Heart left ventricle (tissue), 16 donors: ENCODE measurements at regions of chr10 and their contacts with region 1.

Region 1: GRCh38 chr10:5293691-5294550 is 70.8 kb upstream of the UCN3 start:
- DNase-seq: peak; percentile 34 to 84 (median 42)
- ATAC-seq: peak in 3 of 4 donors; percentile 3 to 47 (median 14)
- H3K4me3 ChIP-seq: peak overlapping the region in 1 of 12 donors; percentile 19
- H3K27ac ChIP-seq: peak overlapping the region in 10 of 12 donors; percentile 18 to 85 (median 58)
- H3K4me1 ChIP-seq: peaks cover 0 to 69% (median 20%) of the 10 kb centered on the region in 12 donors
- H3K27me3 ChIP-seq: no peaks in the 10 kb centered on the region
- CTCF ChIP-seq: peak in 10 of 12 donors; percentile 20 to 51 (median 34)
- POLR2A ChIP-seq: no peak

Region 2: DNA sequence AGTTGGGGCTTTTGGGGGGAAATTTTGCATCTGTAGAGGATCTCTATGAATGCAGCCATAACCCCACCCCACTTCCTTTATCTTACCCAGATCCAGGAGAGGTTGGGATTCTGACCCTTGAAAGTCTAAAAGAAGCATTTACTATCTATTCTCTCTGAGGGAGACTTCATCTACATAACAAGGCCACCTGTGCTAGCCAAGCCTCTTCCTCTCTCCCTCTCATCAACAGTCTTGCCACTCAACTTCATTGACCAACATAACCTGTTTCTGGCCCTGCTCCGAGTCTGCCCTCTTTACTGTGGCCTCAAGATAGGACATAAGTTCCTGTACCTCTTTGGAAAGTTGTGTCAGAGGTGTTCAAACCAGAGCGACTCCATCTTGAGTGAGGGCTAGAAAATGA is 91.3 kb after region 1 on chr10:
- intact Hi-C with region 1: loop called in 1 of 10 experiments (anchors 10 kb)
- DNase-seq: no peak
- ATAC-seq: no peak
- H3K4me3 ChIP-seq: no peak overlapping the region
- H3K27ac ChIP-seq: no peak overlapping the region
- H3K4me1 ChIP-seq: no peaks in the 10 kb centered on the region
- H3K27me3 ChIP-seq: no peaks in the 10 kb centered on the region
- CTCF ChIP-seq: no peak
- POLR2A ChIP-seq: no peak